A673 (cell line): ENCODE measurements at regions of chr6 and their contacts with region 1.

Region 1: DNA sequence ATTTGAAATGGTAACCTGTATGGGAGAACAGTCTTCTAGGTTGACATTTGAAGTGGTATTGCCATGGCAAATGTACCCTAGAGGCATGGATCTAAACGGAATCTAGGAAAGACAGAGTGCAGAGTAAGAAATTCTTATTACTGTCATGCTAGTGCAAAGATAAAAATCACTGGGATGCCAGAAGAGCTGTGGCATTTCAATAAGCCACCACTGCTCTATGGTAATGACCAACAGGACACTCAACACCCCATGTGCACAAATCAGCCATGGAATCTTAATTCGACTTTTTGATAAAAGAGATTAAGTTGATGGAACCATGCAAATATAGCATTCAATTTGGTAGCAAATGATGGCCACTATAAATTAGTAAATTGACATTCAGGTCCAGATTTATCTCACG is 74.1 kb downstream of the ID4 start:
- DNase-seq: no peak
- H3K4me3 ChIP-seq: no peak overlapping the region
- H3K27ac ChIP-seq: no peak overlapping the region
- H3K4me1 ChIP-seq: no peaks in the 10 kb centered on the region
- H3K27me3 ChIP-seq: peaks cover 4% of the 10 kb centered on the region
- CTCF ChIP-seq: no peak

Region 2: DNA sequence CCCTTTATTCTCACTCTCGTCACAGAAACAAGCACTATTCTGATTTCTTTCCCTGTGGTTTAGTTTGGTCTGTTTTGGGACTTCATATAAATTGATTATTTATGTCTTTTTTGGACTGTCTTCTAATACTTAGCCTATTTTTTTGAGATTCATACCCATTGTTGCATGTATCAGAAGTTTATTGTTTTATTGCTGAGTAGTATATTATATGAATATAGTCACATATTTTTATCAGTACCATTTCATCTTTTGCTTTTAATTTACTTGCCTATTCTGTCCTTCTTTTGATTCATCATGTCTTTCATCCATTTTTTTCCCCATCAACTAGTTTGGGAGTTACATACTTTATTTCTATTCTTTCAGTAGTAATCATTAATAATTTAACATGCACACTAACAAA is 37.9 kb after region 1 on chr6:
- CTCF ChIA-PET with region 1: no interaction called
- POLR2A ChIA-PET with region 1: interaction called, 10 read pairs
- intact Hi-C with region 1: no loop called
- DNase-seq: no peak
- H3K4me3 ChIP-seq: no peak overlapping the region
- H3K27ac ChIP-seq: no peak overlapping the region
- H3K4me1 ChIP-seq: no peaks in the 10 kb centered on the region
- H3K27me3 ChIP-seq: no peaks in the 10 kb centered on the region
- CTCF ChIP-seq: no peak

Region 3: DNA sequence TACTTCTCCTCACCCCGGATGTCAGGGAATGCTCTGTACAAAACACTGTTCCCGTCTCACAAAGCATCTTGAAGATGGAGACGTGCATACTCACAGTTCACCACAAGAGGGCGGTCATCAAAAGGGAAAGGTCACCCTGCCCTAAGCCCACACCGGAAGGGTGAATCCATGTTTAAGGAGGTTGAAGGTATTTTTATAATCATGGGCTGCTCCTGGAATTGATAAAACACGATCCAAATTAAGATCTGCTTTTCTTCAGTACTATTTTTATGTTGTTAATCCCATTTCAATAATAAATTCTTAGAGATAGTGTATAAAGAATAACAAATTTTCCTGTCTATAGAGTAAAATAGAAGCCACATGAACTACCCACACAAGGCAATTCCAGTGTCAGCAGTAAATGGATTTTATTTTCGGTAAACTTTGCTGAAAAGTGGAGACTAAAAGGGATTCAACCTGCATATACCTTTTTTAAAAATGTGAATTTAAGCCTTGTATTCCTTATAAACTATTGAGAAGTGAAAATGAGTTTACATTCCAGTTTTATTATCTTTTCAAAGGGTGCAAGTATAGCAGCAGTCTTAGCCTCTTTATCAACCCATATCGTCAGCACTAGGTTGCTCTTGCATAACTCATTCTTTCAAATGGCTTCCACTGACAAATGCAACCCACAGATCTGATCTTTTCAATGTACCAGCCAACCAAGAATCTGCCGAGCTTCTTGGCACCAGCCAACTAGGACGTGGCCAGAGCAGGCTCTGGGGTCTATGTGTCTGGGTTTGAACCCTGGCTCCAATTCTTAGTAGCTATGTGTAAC is 380.7 kb after region 1 on chr6:
- CTCF ChIA-PET with region 1: no interaction called
- POLR2A ChIA-PET with region 1: no interaction called
- intact Hi-C with region 1: no loop called
- DNase-seq: peak; percentile 90
- H3K4me3 ChIP-seq: no peak overlapping the region
- H3K27ac ChIP-seq: no peak overlapping the region
- H3K4me1 ChIP-seq: no peaks in the 10 kb centered on the region
- H3K27me3 ChIP-seq: no peaks in the 10 kb centered on the region
- CTCF ChIP-seq: peak; percentile 89